ENCODE measurements at regions of chr1 and their contacts with region 1.

Region 1: DNA sequence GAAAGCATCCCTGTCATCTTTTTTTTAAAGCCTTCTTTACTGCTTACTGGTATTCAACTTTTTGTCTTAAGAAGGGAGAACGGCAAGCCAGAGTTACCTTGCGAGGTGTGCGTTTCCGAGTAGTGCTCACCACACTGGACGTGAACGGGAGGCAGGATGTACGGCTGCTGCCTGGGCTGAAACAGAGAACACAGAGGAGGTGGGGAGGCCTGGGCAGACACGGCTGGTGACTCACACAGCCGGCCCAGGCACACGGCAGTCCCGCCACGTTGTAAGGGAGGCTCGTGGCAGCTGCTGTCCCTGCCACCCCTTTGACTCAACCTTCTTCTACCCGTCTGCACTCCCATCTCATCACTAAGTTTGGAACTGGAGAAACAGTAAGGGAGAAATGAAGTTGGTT is 105.8 kb downstream of the SMYD2 start:
- DNase-seq: no peak
- H3K4me3 Mint-ChIP-seq: no peak overlapping the region
- H3K27ac Mint-ChIP-seq: no peak overlapping the region
- H3K4me1 Mint-ChIP-seq: no peaks in the 10 kb centered on the region
- H3K27me3 Mint-ChIP-seq: no peaks in the 10 kb centered on the region

Region 2: DNA sequence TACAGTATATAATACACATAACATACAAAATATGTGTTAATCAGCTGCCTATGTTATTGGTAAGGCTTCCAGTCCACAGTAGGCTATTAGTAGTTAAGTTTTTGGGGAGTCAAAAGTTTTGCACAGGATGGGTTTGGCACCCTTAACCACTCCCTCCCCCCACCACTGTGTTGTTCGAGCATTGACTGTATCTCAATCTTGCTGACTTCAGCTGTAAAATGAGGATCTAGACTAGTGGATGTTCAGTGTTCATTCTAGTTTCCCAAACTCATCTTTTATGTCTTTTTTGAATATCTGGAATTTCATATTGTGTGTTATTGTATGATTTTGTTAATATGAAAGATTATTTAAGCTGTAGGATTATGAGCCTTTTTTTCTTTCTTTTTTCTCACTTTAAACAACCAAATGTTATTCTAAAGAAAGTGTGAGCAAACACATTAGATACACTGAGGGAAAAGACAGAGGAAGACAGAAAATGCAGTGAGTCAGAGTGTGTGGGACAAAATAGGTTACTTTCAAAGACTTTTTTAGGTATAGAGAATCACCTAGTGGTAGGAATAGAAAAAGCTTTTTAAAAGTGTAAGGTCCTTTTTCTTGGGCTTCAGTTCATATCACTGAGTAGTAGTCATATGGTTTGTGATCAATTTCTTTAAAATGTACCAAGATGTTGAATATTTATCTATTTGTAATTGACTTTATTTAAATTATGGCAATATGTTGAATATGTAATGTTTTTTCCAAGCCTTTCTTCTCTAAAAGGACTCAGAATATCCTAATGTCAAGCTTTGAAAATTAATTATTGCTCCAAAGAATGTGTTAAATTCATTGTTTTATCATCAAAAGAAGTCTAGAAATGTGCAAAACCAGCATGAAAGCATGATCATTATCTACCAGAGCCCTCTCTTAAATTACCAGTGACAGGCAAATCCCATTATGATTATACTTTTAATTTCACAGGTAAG is 198.3 kb after region 1 on chr1:
- CTCF ChIA-PET with region 1: interaction called, 10 read pairs
- intact Hi-C with region 1: loop called (anchors 1 kb)
- DNase-seq: no peak
- H3K4me3 Mint-ChIP-seq: no peak overlapping the region
- H3K27ac Mint-ChIP-seq: no peak overlapping the region
- H3K4me1 Mint-ChIP-seq: peaks cover 2% of the 10 kb centered on the region
- H3K27me3 Mint-ChIP-seq: no peaks in the 10 kb centered on the region

Measured in activated naive CD4-positive, alpha-beta T cell treated with anti-CD3 and anti-CD28 coated beads for 36 hours (primary cell).